K562 (cell line): ENCODE measurements at regions of chr6 and their contacts with region 1.

Region 1: GRCh38 chr6:87322304-87323212 is at the start of gene SMIM8:
- DNase-seq: peak; percentile 92 to 93 (median 92)
- ATAC-seq: peak; percentile 98
- H3K4me3 ChIP-seq: peak within 1 kb of the TSS; percentile 91
- H3K27ac ChIP-seq: peak within 1 kb of the TSS; percentile 86
- H3K4me1 ChIP-seq: peaks cover 0 to 3% of the 10 kb centered on the region in 2 experiments; a peak in 3 of 5 replicates
- H3K27me3 ChIP-seq: no peaks in the 10 kb centered on the region
- CTCF ChIP-seq: peak; percentile 94 to 96 (median 96)
- EP300 ChIP-seq: peak; percentile 34; the same call in 1 of the 2 replicates
- POLR2A ChIP-seq: peak; percentile 93
- RAD21 ChIP-seq: peak in 1 of 2 experiments; percentile 51; a peak in 3 of 4 replicates
- polyA plus RNA-seq, gene SMIM8: 51.0 to 53.7 TPM

Region 2: DNA sequence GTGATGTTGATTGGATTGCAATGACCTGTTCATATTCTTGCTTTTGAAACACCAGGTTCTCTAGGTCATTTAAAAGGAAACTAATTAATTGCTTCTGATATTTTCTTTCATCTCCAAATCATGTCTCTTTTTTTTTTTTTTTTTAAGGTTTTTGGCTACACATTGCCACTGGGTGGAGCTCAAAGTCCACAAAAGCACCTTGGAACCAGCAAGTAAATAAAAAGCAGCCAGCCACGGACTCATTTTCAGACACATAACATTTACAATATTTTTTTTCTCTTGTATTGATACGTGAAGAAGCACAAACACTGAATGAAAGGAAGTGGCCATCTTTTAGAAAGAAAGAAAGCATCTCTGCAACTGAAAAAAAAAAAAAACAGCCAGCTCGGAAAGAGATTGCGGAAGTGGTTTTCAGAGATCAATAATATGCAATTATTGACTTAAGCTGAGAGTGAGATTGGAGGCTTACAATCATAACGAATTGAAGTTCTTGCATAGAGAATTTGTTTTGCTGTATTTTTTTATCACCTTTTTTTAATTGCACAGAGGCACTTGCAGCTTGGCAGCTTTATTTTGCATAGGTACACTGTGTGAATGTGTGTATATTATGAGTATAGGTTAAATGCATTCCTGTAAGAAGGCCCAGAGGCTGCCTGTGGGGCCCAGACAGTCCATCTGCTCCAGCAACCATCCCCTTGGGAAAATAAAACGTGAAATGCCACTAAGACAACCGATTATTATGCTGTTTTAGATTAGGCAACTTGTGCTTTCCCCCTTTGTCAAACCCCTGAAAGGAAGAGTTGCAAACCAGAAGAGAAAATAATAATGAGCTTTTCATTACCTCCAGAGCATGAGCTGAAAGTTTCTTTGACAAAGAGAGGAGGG is 255.9 kb before region 1 on chr6:
- CTCF ChIA-PET with region 1: no interaction called
- POLR2A ChIA-PET with region 1: no interaction called
- in situ Hi-C with region 1: no loop called
- intact Hi-C with region 1: loop called (anchors 5 kb)
- DNase-seq: peak; percentile 31 to 69 (median 40)
- ATAC-seq: 0 out of 3 replicates have a peak, but pooled peaks have one; percentile 40
- H3K4me3 ChIP-seq: no peak overlapping the region
- H3K27ac ChIP-seq: no peak overlapping the region
- H3K4me1 ChIP-seq: no peaks in the 10 kb centered on the region; a peak in 1 of 5 replicates
- H3K27me3 ChIP-seq: no peaks in the 10 kb centered on the region
- CTCF ChIP-seq: peak; percentile 50 to 86 (median 57); a peak in 5 of 6 replicates
- EP300 ChIP-seq: no peak
- POLR2A ChIP-seq: no peak
- RAD21 ChIP-seq: peak; percentile 69 to 86

Region 3: GRCh38 chr6:87364602-87365277 is 42.2 kb after region 1 on chr6:
- CTCF ChIA-PET with region 1: no interaction called
- POLR2A ChIA-PET with region 1: interaction called, 3 read pairs
- in situ Hi-C with region 1: no loop called
- intact Hi-C with region 1: loop called (anchors 2 kb)
- DNase-seq: peak; percentile 82 to 90 (median 84)
- ATAC-seq: peak; percentile 96
- H3K4me3 ChIP-seq: no peak overlapping the region
- H3K27ac ChIP-seq: peak overlapping the region; percentile 51; the same call in 2 of the 3 replicates
- H3K4me1 ChIP-seq: peaks cover 4 to 10% of the 10 kb centered on the region in 2 experiments; a peak in 4 of 5 replicates
- H3K27me3 ChIP-seq: no peaks in the 10 kb centered on the region
- CTCF ChIP-seq: peak in 1 of 3 experiments; percentile 24; a peak in 2 of 6 replicates
- EP300 ChIP-seq: peak; percentile 92
- POLR2A ChIP-seq: no peak
- RAD21 ChIP-seq: 0 out of 4 replicates have a peak, but pooled peaks of 1 of the 2 experiments have one; percentile 5